ENCODE measurements at regions of chr3 and their contacts with region 1.

Region 1: GRCh38 chr3:81249540-81250029 is 511.9 kb downstream of the GBE1 start:
- DNase-seq: peak; percentile 97
- ATAC-seq: peak; percentile 100
- H3K4me3 ChIP-seq: no peak overlapping the region; a peak in 1 of 6 replicates
- H3K27ac ChIP-seq: peak overlapping the region; percentile 25
- H3K4me1 ChIP-seq: peaks cover 26% of the 10 kb centered on the region
- H3K27me3 ChIP-seq: no peaks in the 10 kb centered on the region
- CTCF ChIP-seq: no peak
- EP300 ChIP-seq: peak; percentile 66 to 87; a peak in 3 of 4 replicates
- POLR2A ChIP-seq: no peak
- RAD21 ChIP-seq: no peak

Region 2: GRCh38 chr3:81302045-81302444 is 52.5 kb after region 1 on chr3:
- CTCF ChIA-PET with region 1: no interaction called
- POLR2A ChIA-PET with region 1: interaction called, 18 read pairs
- in situ Hi-C with region 1: no loop called
- intact Hi-C with region 1: loop called (anchors 1 kb)
- DNase-seq: peak; percentile 48
- ATAC-seq: peak; percentile 59
- H3K4me3 ChIP-seq: no peak overlapping the region
- H3K27ac ChIP-seq: no peak overlapping the region
- H3K4me1 ChIP-seq: peaks cover 28% of the 10 kb centered on the region
- H3K27me3 ChIP-seq: peaks cover 0 to 9% of the 10 kb centered on the region in 2 experiments; a peak in 1 of 5 replicates
- CTCF ChIP-seq: peak; percentile 70
- EP300 ChIP-seq: no peak
- POLR2A ChIP-seq: no peak
- RAD21 ChIP-seq: 0 out of 2 replicates have a peak, but pooled peaks have one; percentile 26

Region 3: GRCh38 chr3:81375921-81376320 is 126.3 kb after region 1 on chr3:
- CTCF ChIA-PET with region 1: no interaction called
- POLR2A ChIA-PET with region 1: no interaction called
- in situ Hi-C with region 1: no loop called
- intact Hi-C with region 1: no loop called
- DNase-seq: no peak
- ATAC-seq: no peak
- H3K4me3 ChIP-seq: no peak overlapping the region
- H3K27ac ChIP-seq: no peak overlapping the region
- H3K4me1 ChIP-seq: no peaks in the 10 kb centered on the region
- H3K27me3 ChIP-seq: no peaks in the 10 kb centered on the region
- CTCF ChIP-seq: no peak
- EP300 ChIP-seq: no peak
- POLR2A ChIP-seq: no peak
- RAD21 ChIP-seq: no peak

Measured in HepG2 (cell line).